Breast epithelium (tissue), 4 donors: ENCODE measurements at regions of chr2 and their contacts with region 1.

Region 1: GRCh38 chr2:20762945-20763683 is 59.8 kb downstream of the LDAH start:
- DNase-seq: no peak
- H3K4me3 ChIP-seq: no peak overlapping the region
- H3K27ac ChIP-seq: no peak overlapping the region
- H3K4me1 ChIP-seq: no peaks in the 10 kb centered on the region
- H3K27me3 ChIP-seq: no peaks in the 10 kb centered on the region
- CTCF ChIP-seq: no peak
- POLR2A ChIP-seq: no peak

Region 2: DNA sequence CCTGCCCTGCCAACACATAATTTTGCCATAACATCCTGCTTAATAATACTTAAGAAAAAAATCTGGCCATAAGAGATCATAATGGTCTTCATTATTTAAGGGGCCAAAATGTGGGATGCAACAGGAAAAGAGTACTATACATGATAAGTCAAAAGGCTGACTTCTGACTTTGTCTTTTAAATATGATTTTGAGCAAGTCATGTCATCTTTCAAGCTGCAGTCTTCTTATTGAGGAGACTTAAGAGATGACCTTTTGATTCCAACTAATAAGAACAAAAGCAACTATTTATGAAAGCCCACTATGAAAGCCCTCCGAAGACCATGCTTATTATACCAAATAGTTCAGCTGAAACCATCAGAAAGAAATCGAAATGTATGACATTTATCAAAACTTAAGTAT is 454.1 kb before region 1 on chr2:
- intact Hi-C with region 1: loop called (anchors 5 kb)
- DNase-seq: no peak
- H3K4me3 ChIP-seq: no peak overlapping the region
- H3K27ac ChIP-seq: no peak overlapping the region
- H3K4me1 ChIP-seq: no peaks in the 10 kb centered on the region
- H3K27me3 ChIP-seq: no peaks in the 10 kb centered on the region
- CTCF ChIP-seq: no peak
- POLR2A ChIP-seq: no peak

Region 3: DNA sequence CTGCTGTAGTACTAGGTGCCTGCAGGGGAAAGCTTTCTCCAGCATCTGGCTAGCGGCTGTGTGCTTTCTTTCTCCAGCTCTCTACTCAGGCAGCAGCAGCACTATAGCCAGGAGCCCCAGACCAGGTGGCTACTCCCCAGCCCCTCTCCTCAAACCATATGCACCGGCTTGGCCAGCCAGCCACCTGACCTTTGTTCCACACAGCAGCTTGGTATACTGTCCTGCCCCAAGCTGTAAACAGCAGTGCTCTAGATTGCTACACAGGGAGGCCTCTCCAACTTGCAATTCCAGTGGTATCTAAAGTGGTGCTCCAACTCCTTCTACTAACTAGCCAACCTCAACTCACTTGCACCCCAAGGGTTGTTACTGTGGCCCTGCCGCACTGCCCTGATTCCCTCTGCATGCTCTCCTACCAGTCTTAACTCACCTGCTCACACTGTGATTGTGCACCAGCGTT is 40.1 kb after region 1 on chr2:
- intact Hi-C with region 1: no loop called
- DNase-seq: no peak
- H3K4me3 ChIP-seq: no peak overlapping the region
- H3K27ac ChIP-seq: no peak overlapping the region
- H3K4me1 ChIP-seq: no peaks in the 10 kb centered on the region
- H3K27me3 ChIP-seq: no peaks in the 10 kb centered on the region
- CTCF ChIP-seq: no peak
- POLR2A ChIP-seq: no peak

Region 4: GRCh38 chr2:20822535-20823490 is 59.7 kb after region 1 on chr2 and contains the start of gene LDAH:
- intact Hi-C with region 1: no loop called
- DNase-seq: peak; percentile 87 to 91
- H3K4me3 ChIP-seq: peak within 1 kb of the TSS; percentile 68 to 88 (median 84)
- H3K27ac ChIP-seq: peak within 1 kb of the TSS; percentile 89 to 94
- H3K4me1 ChIP-seq: no peaks in the 10 kb centered on the region
- H3K27me3 ChIP-seq: no peaks in the 10 kb centered on the region
- CTCF ChIP-seq: no peak
- POLR2A ChIP-seq: no peak
- total RNA-seq, gene LDAH: 12.3 to 17.0 (median 12.5) TPM